ENCODE measurements at regions of chr12 and their contacts with region 1.

Region 1: DNA sequence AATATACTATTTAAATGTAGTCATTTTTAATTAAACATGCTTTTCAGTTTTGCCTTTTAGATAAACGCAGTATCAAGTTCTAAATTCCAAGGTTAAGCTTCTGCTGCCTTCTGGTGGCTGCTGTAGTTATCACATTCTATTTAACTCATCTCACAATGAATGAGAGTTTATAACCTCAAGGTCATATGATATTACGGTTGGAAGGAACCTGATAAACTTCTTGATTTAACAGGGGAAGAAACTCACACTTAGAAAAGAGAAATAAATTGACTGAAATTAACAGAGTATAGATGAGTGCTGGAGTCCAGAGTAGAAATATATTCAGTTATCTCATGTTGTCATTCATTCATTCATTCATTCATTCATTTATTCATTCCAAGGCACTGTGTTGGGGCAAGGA is 31.9 kb downstream of the GUCY2C start:
- DNase-seq: peak; percentile 77
- ATAC-seq: peak; percentile 80
- H3K4me3 ChIP-seq: no peak overlapping the region
- H3K4me3 Mint-ChIP-seq: no peak overlapping the region
- H3K27ac ChIP-seq: no peak overlapping the region
- H3K27ac Mint-ChIP-seq: no peak overlapping the region
- H3K4me1 ChIP-seq: no peaks in the 10 kb centered on the region
- H3K4me1 Mint-ChIP-seq: peaks cover 12% of the 10 kb centered on the region
- H3K27me3 ChIP-seq: no peaks in the 10 kb centered on the region
- H3K27me3 Mint-ChIP-seq: no peaks in the 10 kb centered on the region
- CTCF ChIP-seq: peak; percentile 82

Region 2: DNA sequence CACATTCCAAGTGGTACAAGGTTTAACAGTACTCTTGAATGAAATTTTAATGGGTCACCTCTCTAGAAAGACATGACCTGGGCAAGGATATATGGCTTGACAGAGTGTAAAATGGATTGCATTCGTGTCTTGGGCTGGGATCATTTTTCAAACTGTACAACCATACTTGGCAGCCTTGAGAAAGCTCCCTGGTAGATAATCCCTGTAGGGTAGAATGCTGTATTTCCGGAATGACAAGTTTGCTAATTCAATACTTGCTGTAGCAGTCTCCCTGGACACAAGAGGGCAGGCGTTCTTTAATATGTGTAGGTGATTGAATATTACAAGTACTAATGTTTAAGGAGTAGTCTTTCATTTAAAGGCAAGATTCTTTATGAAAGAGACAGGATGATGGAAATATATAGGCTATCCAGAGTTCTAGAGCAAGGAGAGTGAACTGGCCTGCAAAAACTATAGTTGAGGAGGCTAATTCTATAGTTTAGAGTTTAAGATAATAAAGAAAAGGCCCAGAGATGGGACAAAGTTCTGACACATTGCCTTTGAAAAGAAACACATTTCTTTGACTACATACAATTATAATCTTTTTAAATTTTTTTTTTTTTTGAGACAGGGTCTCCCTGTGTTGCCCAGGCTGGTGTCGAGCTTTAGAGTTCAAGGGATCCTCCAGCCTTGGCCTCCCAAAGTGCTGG is 150.2 kb before region 1 on chr12:
- CTCF ChIA-PET with region 1: interaction called, 6 read pairs
- POLR2A ChIA-PET with region 1: no interaction called
- intact Hi-C with region 1: loop called (anchors 1 kb)
- DNase-seq: peak; percentile 47
- ATAC-seq: peak; percentile 57
- H3K4me3 ChIP-seq: no peak overlapping the region
- H3K4me3 Mint-ChIP-seq: no peak overlapping the region
- H3K27ac ChIP-seq: no peak overlapping the region
- H3K27ac Mint-ChIP-seq: no peak overlapping the region
- H3K4me1 ChIP-seq: no peaks in the 10 kb centered on the region
- H3K4me1 Mint-ChIP-seq: no peaks in the 10 kb centered on the region
- H3K27me3 ChIP-seq: no peaks in the 10 kb centered on the region
- H3K27me3 Mint-ChIP-seq: no peaks in the 10 kb centered on the region
- CTCF ChIP-seq: peak; percentile 53

Region 3: GRCh38 chr12:14618983-14619382 is 45.5 kb before region 1 on chr12:
- CTCF ChIA-PET with region 1: interaction called, 93 read pairs
- POLR2A ChIA-PET with region 1: interaction called, 4 read pairs
- intact Hi-C with region 1: loop called (anchors 10 kb)
- DNase-seq: peak; percentile 32
- ATAC-seq: no peak
- H3K4me3 ChIP-seq: no peak overlapping the region
- H3K4me3 Mint-ChIP-seq: no peak overlapping the region
- H3K27ac ChIP-seq: no peak overlapping the region
- H3K27ac Mint-ChIP-seq: peak overlapping the region; percentile 17
- H3K4me1 ChIP-seq: peaks cover 34 to 40% of the 10 kb centered on the region in 2 donors
- H3K4me1 Mint-ChIP-seq: peaks cover 42% of the 10 kb centered on the region
- H3K27me3 ChIP-seq: no peaks in the 10 kb centered on the region
- H3K27me3 Mint-ChIP-seq: no peaks in the 10 kb centered on the region
- CTCF ChIP-seq: peak; percentile 23

Region 4: DNA sequence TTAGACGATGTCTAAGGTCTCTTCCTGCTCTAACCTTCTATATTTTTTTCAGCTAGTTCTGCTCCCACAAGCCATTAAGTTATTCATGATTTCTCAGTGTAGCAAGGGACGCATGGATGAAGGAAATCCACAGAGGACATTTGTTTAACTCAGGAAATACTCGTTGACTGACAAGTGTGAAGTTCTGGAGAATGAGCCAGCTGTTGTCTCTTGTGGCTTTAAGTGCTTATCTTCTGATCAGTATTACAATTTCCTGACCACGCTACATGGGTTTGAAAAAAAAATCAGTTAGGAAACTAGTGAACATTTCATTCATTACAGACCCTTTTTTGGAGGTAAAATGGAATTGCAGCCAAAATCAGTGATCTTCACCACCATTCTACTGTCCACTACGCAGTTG is 21.3 kb before region 1 on chr12:
- CTCF ChIA-PET with region 1: interaction called, 9 read pairs
- POLR2A ChIA-PET with region 1: interaction called, 7 read pairs
- intact Hi-C with region 1: loop called (anchors 2 kb)
- DNase-seq: no peak
- ATAC-seq: no peak
- H3K4me3 ChIP-seq: no peak overlapping the region
- H3K4me3 Mint-ChIP-seq: peak overlapping the region; percentile 70
- H3K27ac ChIP-seq: no peak overlapping the region
- H3K27ac Mint-ChIP-seq: no peak overlapping the region
- H3K4me1 ChIP-seq: peaks cover 15 to 17% of the 10 kb centered on the region in 2 donors
- H3K4me1 Mint-ChIP-seq: peaks cover 16% of the 10 kb centered on the region
- H3K27me3 ChIP-seq: no peaks in the 10 kb centered on the region
- H3K27me3 Mint-ChIP-seq: peaks cover 5% of the 10 kb centered on the region
- CTCF ChIP-seq: no peak

Region 5: GRCh38 chr12:14723763-14724162 is 59.3 kb after region 1 on chr12:
- CTCF ChIA-PET with region 1: no interaction called
- POLR2A ChIA-PET with region 1: no interaction called
- intact Hi-C with region 1: no loop called
- DNase-seq: peak; percentile 65
- ATAC-seq: peak; percentile 56
- H3K4me3 ChIP-seq: no peak overlapping the region
- H3K4me3 Mint-ChIP-seq: no peak overlapping the region
- H3K27ac ChIP-seq: no peak overlapping the region
- H3K27ac Mint-ChIP-seq: no peak overlapping the region
- H3K4me1 ChIP-seq: no peaks in the 10 kb centered on the region
- H3K4me1 Mint-ChIP-seq: no peaks in the 10 kb centered on the region
- H3K27me3 ChIP-seq: no peaks in the 10 kb centered on the region
- H3K27me3 Mint-ChIP-seq: peaks cover 13% of the 10 kb centered on the region
- CTCF ChIP-seq: peak; percentile 79

Measured in B cell (primary cell).